ENCODE measurements at regions of chr9 and their contacts with region 1.

Region 1: DNA sequence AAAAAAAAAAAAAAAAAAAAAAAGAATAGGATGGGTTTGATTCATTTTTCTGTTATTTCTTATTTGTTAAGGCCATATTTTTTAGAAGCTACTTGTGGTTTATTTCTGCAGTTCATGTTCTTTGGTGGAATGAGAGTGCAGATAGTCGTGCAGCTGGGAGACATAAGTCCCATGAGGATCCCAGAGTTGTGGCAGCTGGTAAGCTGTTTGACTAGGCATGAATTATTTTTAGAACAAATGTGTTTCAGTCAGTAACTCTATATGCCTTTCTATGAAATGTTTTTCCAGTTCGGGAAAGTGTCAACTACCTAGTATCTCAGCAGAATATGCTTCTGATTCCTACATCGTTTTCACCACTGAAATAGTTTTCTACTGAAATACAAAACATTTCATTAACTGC is 5.0 kb upstream of the NIPSNAP3B start:
- DNase-seq: no peak
- ATAC-seq: peak; percentile 14; the same call in 1 of the 3 replicates
- H3K4me3 ChIP-seq: no peak overlapping the region
- H3K27ac ChIP-seq: no peak overlapping the region
- H3K4me1 ChIP-seq: no peaks in the 10 kb centered on the region
- H3K27me3 ChIP-seq: no peaks in the 10 kb centered on the region
- CTCF ChIP-seq: no peak
- EP300 ChIP-seq: no peak
- POLR2A ChIP-seq: no peak
- RAD21 ChIP-seq: no peak

Region 2: DNA sequence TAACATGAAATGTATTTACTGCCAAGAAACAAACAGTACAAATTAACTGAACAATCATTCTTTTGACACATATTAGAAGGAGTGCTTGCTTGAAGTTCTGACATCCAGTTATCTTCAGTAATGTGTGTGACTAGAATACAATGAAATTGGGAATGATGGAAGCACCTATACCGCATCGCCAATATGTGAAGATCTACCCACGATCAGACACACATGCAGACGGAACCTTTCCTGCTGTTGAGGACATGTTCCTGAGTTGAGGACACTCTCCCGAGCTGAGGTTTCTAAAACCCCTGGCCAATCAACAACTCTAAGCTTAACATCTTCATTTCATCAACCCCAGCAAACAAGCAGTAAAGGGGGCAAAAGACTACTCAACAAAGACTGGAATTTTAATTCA is 222.2 kb before region 1 on chr9 and contains the start of gene OR13C3:
- CTCF ChIA-PET with region 1: no interaction called
- POLR2A ChIA-PET with region 1: interaction called, 10 read pairs
- RAD21 ChIA-PET with region 1: no interaction called
- SMC1A ChIA-PET with region 1: no interaction called
- in situ Hi-C with region 1: no loop called
- intact Hi-C with region 1: no loop called
- DNase-seq: no peak
- ATAC-seq: no peak
- H3K4me3 ChIP-seq: no peak within 1 kb of the TSS
- H3K27ac ChIP-seq: no peak within 1 kb of the TSS
- H3K4me1 ChIP-seq: no peaks in the 10 kb centered on the region
- H3K27me3 ChIP-seq: no peaks in the 10 kb centered on the region
- CTCF ChIP-seq: no peak
- EP300 ChIP-seq: no peak
- POLR2A ChIP-seq: no peak
- RAD21 ChIP-seq: no peak
- polyA plus RNA-seq, gene OR13C3: not detected

Region 3: GRCh38 chr9:104575456-104575855 is 183.5 kb before region 1 on chr9:
- CTCF ChIA-PET with region 1: no interaction called
- POLR2A ChIA-PET with region 1: no interaction called
- RAD21 ChIA-PET with region 1: no interaction called
- SMC1A ChIA-PET with region 1: no interaction called
- in situ Hi-C with region 1: no loop called
- intact Hi-C with region 1: no loop called
- DNase-seq: no peak
- ATAC-seq: no peak
- H3K4me3 ChIP-seq: no peak overlapping the region
- H3K27ac ChIP-seq: no peak overlapping the region
- H3K4me1 ChIP-seq: no peaks in the 10 kb centered on the region
- H3K27me3 ChIP-seq: no peaks in the 10 kb centered on the region
- CTCF ChIP-seq: no peak
- EP300 ChIP-seq: no peak
- POLR2A ChIP-seq: no peak
- RAD21 ChIP-seq: no peak

Region 4: DNA sequence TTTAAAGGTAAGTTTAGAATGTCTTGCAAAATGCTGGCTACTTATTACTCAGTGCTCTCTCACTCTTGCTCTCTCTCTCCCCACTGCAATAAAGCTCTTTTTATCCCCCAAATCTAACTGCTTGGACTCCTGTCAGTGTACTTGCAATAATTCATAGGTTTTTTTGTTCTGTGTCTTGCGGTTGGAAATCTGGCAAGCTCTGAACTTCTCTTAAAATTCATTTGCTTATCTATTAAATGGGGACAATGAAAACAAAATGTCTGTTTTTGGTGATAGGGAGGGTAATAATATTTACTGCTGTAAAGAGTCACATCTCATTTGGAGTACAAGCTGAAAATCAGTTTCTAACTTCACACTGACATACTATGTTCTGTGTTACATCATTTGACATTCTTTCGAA is 83.4 kb before region 1 on chr9:
- CTCF ChIA-PET with region 1: no interaction called
- POLR2A ChIA-PET with region 1: no interaction called
- RAD21 ChIA-PET with region 1: no interaction called
- SMC1A ChIA-PET with region 1: no interaction called
- in situ Hi-C with region 1: no loop called
- intact Hi-C with region 1: no loop called
- DNase-seq: no peak
- ATAC-seq: no peak
- H3K4me3 ChIP-seq: no peak overlapping the region
- H3K27ac ChIP-seq: no peak overlapping the region
- H3K4me1 ChIP-seq: no peaks in the 10 kb centered on the region
- H3K27me3 ChIP-seq: no peaks in the 10 kb centered on the region
- CTCF ChIP-seq: no peak
- EP300 ChIP-seq: no peak
- POLR2A ChIP-seq: no peak
- RAD21 ChIP-seq: no peak

Region 5: GRCh38 chr9:104725014-104725413 is 34.0 kb before region 1 on chr9:
- CTCF ChIA-PET with region 1: no interaction called
- POLR2A ChIA-PET with region 1: no interaction called
- RAD21 ChIA-PET with region 1: no interaction called
- SMC1A ChIA-PET with region 1: no interaction called
- in situ Hi-C with region 1: no loop called
- intact Hi-C with region 1: no loop called
- DNase-seq: no peak
- ATAC-seq: no peak
- H3K4me3 ChIP-seq: no peak overlapping the region
- H3K27ac ChIP-seq: no peak overlapping the region
- H3K4me1 ChIP-seq: no peaks in the 10 kb centered on the region
- H3K27me3 ChIP-seq: no peaks in the 10 kb centered on the region
- CTCF ChIP-seq: no peak
- EP300 ChIP-seq: no peak
- POLR2A ChIP-seq: no peak
- RAD21 ChIP-seq: no peak

Region 6: GRCh38 chr9:104774831-104775573 is 16.0 kb after region 1 on chr9:
- CTCF ChIA-PET with region 1: interaction called, 4 read pairs
- POLR2A ChIA-PET with region 1: interaction called, 16 read pairs
- RAD21 ChIA-PET with region 1: interaction called, 28 read pairs
- SMC1A ChIA-PET with region 1: interaction called, 17 read pairs
- in situ Hi-C with region 1: no loop called
- intact Hi-C with region 1: no loop called
- DNase-seq: peak; percentile 85
- ATAC-seq: peak; percentile 84
- H3K4me3 ChIP-seq: peak overlapping the region; percentile 63
- H3K27ac ChIP-seq: peak overlapping the region; percentile 98
- H3K4me1 ChIP-seq: peaks cover 17% of the 10 kb centered on the region
- H3K27me3 ChIP-seq: no peaks in the 10 kb centered on the region
- CTCF ChIP-seq: no peak
- EP300 ChIP-seq: peak; percentile 13 to 57; a peak in 2 of 4 replicates
- POLR2A ChIP-seq: peak; percentile 73
- RAD21 ChIP-seq: no peak

Region 7: GRCh38 chr9:104826907-104827306 is 67.9 kb after region 1 on chr9:
- CTCF ChIA-PET with region 1: no interaction called
- POLR2A ChIA-PET with region 1: no interaction called
- RAD21 ChIA-PET with region 1: no interaction called
- SMC1A ChIA-PET with region 1: no interaction called
- in situ Hi-C with region 1: no loop called
- intact Hi-C with region 1: no loop called
- DNase-seq: no peak
- ATAC-seq: no peak
- H3K4me3 ChIP-seq: no peak overlapping the region
- H3K27ac ChIP-seq: no peak overlapping the region
- H3K4me1 ChIP-seq: no peaks in the 10 kb centered on the region
- H3K27me3 ChIP-seq: 0 out of 4 replicates have a peak, but pooled peaks cover 0 to 2% of the 10 kb centered on the region in 2 experiments
- CTCF ChIP-seq: no peak
- EP300 ChIP-seq: no peak
- POLR2A ChIP-seq: no peak
- RAD21 ChIP-seq: no peak